ENCODE measurements at regions of chrX and their contacts with region 1.

Region 1: DNA sequence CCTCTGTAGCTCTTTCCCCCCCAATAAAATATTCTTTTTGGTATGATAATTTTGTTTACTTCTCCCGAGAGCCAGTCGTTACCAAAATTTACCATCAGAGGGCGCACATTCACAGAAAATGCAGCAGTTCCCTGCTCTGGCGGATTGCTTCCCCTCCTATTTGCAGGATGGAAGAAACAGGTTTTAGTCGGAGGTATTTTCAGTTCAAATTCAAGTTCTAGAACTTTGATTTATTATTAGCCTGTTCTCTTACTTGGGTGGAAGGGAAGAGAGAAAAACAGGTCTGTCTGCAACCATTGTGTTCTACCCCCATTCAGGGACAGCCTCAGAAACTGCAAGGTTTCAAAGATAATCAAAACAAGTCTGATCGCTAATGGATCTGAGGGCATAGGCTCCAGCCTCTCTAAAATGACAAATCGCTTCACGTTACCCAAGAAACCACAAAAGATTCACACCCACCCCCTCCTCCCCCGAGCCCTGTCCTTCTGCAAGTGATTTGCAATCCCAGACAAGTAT is 263.8 kb upstream of the RPS6KA3 start:
- DNase-seq: peak; percentile 5
- ATAC-seq: peak; percentile 77
- H3K4me3 ChIP-seq: no peak overlapping the region
- H3K27ac ChIP-seq: no peak overlapping the region
- H3K4me1 ChIP-seq: no peaks in the 10 kb centered on the region
- H3K27me3 ChIP-seq: no peaks in the 10 kb centered on the region; a peak in 2 of 4 replicates
- CTCF ChIP-seq: peak; percentile 71 to 75 (median 72)
- EP300 ChIP-seq: no peak
- POLR2A ChIP-seq: no peak
- RAD21 ChIP-seq: peak; percentile 82

Region 2: GRCh38 chrX:20515841-20516461 is 14.5 kb before region 1 on chrX:
- CTCF ChIA-PET with region 1: interaction called, 24 read pairs
- POLR2A ChIA-PET with region 1: no interaction called
- RAD21 ChIA-PET with region 1: interaction called, 8 read pairs
- SMC1A ChIA-PET with region 1: interaction called, 11 read pairs
- in situ Hi-C with region 1: no loop called
- intact Hi-C with region 1: no loop called
- DNase-seq: peak; percentile 53
- ATAC-seq: peak; percentile 96
- H3K4me3 ChIP-seq: no peak overlapping the region
- H3K27ac ChIP-seq: no peak overlapping the region
- H3K4me1 ChIP-seq: peaks cover 14% of the 10 kb centered on the region; the same call in 1 of the 2 replicates
- H3K27me3 ChIP-seq: no peaks in the 10 kb centered on the region; a peak in 2 of 4 replicates
- CTCF ChIP-seq: no peak
- EP300 ChIP-seq: peak in 1 of 2 experiments; percentile 91; a peak in 1 of 4 replicates
- POLR2A ChIP-seq: no peak
- RAD21 ChIP-seq: no peak

Region 3: GRCh38 chrX:20668550-20668949 is 138.1 kb after region 1 on chrX:
- CTCF ChIA-PET with region 1: no interaction called
- POLR2A ChIA-PET with region 1: no interaction called
- RAD21 ChIA-PET with region 1: no interaction called
- SMC1A ChIA-PET with region 1: no interaction called
- in situ Hi-C with region 1: no loop called
- intact Hi-C with region 1: no loop called
- DNase-seq: no peak
- ATAC-seq: peak; percentile 57
- H3K4me3 ChIP-seq: no peak overlapping the region
- H3K27ac ChIP-seq: no peak overlapping the region
- H3K4me1 ChIP-seq: no peaks in the 10 kb centered on the region
- H3K27me3 ChIP-seq: no peaks in the 10 kb centered on the region
- CTCF ChIP-seq: no peak
- EP300 ChIP-seq: no peak
- POLR2A ChIP-seq: no peak
- RAD21 ChIP-seq: no peak

Region 4: DNA sequence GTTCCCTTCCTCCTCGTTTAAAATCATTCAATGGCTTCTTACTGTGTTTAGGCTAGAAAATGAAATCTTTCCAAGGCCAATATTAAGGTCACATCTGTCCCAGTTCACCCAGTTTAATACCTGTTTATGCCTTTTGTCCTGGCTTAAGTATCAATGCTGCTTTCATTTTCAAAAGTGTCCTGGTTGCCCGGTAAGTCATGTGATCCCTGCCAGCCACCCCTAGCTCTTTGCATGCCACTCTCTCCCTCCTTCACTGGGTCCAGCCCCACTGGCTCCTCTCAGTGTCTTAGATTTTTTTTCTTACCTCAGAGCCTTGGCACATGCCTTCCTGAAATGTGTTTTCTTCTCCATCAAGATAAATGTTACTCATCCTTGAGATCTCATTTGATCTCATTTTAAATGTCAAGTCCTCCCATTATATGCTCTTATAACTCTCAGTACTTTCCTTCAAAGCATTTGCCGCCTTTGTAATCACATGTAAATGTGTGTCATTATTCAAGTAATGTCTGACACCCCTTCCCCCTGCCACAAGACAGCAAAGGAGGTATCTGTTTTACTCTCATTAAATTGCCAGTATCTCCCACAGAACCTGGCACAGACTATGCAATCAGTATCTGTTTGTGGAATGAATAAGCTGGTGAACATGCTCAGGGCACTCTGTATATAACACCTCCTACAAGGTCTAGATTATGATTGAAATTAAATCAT is 208.7 kb after region 1 on chrX:
- CTCF ChIA-PET with region 1: no interaction called
- POLR2A ChIA-PET with region 1: no interaction called
- RAD21 ChIA-PET with region 1: no interaction called
- SMC1A ChIA-PET with region 1: no interaction called
- in situ Hi-C with region 1: no loop called
- intact Hi-C with region 1: loop called (anchors 5 kb)
- DNase-seq: no peak
- ATAC-seq: no peak
- H3K4me3 ChIP-seq: no peak overlapping the region
- H3K27ac ChIP-seq: no peak overlapping the region
- H3K4me1 ChIP-seq: no peaks in the 10 kb centered on the region
- H3K27me3 ChIP-seq: no peaks in the 10 kb centered on the region
- CTCF ChIP-seq: no peak
- EP300 ChIP-seq: no peak
- POLR2A ChIP-seq: no peak
- RAD21 ChIP-seq: no peak

Region 5: GRCh38 chrX:21479695-21480270 is 949.3 kb after region 1 on chrX:
- CTCF ChIA-PET with region 1: interaction called, 148 read pairs
- POLR2A ChIA-PET with region 1: no interaction called
- RAD21 ChIA-PET with region 1: interaction called, 20 read pairs
- SMC1A ChIA-PET with region 1: interaction called, 57 read pairs
- in situ Hi-C with region 1: loop called (anchors 5 kb)
- intact Hi-C with region 1: loop called (anchors 1 kb)
- DNase-seq: no peak
- ATAC-seq: peak; percentile 87
- H3K4me3 ChIP-seq: no peak overlapping the region
- H3K27ac ChIP-seq: no peak overlapping the region
- H3K4me1 ChIP-seq: no peaks in the 10 kb centered on the region
- H3K27me3 ChIP-seq: no peaks in the 10 kb centered on the region
- CTCF ChIP-seq: peak; percentile 60 to 69 (median 66); a peak in 5 of 6 replicates
- EP300 ChIP-seq: no peak
- POLR2A ChIP-seq: no peak
- RAD21 ChIP-seq: peak; percentile 79

Region 6: DNA sequence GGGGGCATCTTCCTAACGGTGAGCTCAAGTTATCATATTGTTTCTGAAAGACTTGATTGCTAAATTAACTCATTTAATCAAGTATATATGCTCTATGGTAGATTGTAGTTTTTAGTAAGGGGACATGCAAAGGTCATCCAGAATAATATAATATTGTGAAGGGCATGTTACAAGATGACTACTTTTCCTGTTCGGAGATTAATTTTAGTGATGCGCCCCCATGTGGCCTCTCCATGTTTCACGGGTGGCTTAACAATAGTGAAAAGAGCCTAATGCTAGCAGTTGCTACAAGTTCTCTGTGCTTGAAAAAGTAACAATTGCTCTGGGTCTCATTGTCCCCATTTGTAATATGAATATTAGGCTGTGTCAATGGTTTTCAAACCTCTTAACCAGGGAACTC is 1215.3 kb after region 1 on chrX:
- CTCF ChIA-PET with region 1: interaction called, 27 read pairs
- POLR2A ChIA-PET with region 1: no interaction called
- RAD21 ChIA-PET with region 1: interaction called, 5 read pairs
- SMC1A ChIA-PET with region 1: interaction called, 5 read pairs
- in situ Hi-C with region 1: no loop called
- intact Hi-C with region 1: loop called (anchors 1 kb)
- DNase-seq: no peak
- ATAC-seq: peak; percentile 79
- H3K4me3 ChIP-seq: no peak overlapping the region
- H3K27ac ChIP-seq: no peak overlapping the region
- H3K4me1 ChIP-seq: no peaks in the 10 kb centered on the region
- H3K27me3 ChIP-seq: no peaks in the 10 kb centered on the region
- CTCF ChIP-seq: peak; percentile 58 to 72 (median 63)
- EP300 ChIP-seq: no peak
- POLR2A ChIP-seq: no peak
- RAD21 ChIP-seq: peak; percentile 56

Measured in GM12878 (cell line).